PC-3 (cell line): ENCODE measurements at regions of chr17 and their contacts with region 1.

Region 1: DNA sequence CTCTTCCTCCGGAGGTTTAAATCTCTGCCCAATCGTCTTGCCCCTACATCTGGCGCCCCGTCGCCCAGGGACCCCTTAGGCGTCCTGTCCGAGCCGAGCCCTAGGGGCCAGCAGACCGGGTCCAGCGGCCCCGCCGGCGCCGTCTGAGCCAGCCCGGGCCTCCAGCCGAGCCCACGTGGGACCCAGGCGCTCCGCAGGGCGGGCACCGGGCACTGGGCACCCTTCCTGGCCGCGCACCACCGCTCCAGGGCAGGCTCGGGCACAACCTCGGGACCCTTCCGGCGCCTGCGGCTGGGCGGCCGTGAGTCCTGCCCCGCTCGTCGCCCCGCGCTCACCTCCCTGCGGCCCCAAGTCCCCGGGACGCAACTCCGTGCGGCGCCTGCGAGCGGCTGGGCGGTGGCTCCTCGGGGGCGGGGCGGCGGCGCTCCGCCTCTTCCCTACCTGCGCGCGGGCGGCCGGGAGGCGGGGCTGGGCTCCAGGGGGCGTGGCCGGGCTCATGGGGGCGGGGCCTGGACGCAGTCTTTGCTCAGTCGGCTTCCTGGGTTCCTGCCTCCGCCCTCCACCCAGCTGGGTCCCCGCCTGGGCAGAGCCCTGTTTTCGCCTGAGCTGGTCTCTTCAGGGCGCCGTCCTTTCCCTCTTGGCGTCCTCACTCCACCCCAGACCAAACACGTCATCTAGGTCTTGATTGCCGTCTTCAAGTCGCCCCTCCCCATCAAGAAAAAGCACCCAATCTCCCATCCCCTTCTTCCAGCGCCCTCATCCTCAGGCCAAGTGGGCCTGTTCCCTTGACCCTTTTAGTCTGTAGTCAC is at the start of gene RHBDF2:
- DNase-seq: peak; percentile 91
- ATAC-seq: peak; percentile 69
- H3K4me3 ChIP-seq: peak within 1 kb of the TSS; percentile 98
- H3K27ac ChIP-seq: peak within 1 kb of the TSS; percentile 49
- H3K4me1 ChIP-seq: peaks cover 33% of the 10 kb centered on the region
- H3K27me3 ChIP-seq: no peaks in the 10 kb centered on the region
- CTCF ChIP-seq: no peak
- total RNA-seq, gene RHBDF2: 52.3 and 74.8 TPM in 2 replicates

Region 2: DNA sequence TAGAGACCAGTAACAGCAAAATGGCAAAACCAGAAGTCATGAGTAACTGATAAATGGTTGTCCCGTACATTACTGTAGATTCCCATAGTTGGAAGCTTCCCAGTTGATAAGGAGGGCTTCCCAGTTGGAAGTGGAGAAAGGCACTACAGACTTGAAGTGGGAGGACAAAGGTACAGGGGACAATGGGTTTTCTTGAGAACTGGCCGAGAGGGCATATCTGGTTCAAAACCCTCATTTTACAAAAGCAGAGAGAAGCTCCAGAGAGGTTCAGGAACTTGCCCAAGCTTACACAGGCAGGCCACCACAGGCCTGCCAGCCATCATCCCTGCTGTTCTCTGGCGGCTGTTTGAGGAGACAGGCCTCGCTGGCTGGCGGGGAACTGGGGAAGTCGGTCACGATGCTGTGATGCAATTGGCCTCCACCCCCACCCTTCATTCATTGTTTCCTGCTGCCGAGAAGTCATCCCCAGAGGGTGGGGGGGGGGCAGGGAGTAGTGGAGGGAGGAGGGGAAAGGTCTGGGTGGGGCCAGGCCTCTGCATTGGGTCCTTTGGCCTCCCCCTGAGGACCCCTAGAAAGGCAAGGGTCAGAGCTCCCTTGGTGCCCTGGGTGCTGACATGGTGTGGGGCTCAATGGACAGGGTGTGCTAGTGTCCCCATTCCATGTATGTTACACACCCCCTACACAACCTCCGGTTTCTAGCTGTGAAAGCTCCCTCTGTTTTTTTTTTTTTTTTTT is 233.0 kb before region 1 on chr17:
- CTCF ChIA-PET with region 1: no interaction called
- POLR2A ChIA-PET with region 1: no interaction called
- intact Hi-C with region 1: no loop called
- DNase-seq: no peak
- ATAC-seq: no peak
- H3K4me3 ChIP-seq: no peak overlapping the region
- H3K27ac ChIP-seq: no peak overlapping the region
- H3K4me1 ChIP-seq: peaks cover 33% of the 10 kb centered on the region
- H3K27me3 ChIP-seq: no peaks in the 10 kb centered on the region
- CTCF ChIP-seq: no peak

Region 3: DNA sequence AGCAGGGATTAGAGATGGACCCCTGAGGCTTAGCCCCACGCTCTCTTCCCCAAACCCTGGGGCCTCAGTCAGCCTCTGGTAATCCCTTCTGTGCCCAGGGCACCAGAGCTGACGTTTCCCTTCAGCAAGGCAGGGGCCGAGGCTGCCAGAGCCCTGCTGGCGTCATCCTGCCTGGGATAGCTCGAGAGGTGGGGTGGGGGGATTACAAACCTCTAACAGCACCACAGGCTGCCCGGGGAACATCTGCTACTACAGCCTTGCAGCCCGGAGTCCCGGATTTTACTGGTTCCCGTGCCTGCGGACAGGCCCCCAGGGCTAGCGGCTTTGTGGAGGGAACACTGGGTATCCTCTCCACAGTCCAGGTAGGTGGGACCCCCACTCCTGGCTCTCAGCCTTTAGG is 33.9 kb before region 1 on chr17 and contains the start of gene AANAT:
- CTCF ChIA-PET with region 1: interaction called, 13 read pairs
- POLR2A ChIA-PET with region 1: no interaction called
- intact Hi-C with region 1: loop called (anchors 1 kb)
- DNase-seq: no peak
- ATAC-seq: no peak
- H3K4me3 ChIP-seq: no peak within 1 kb of the TSS
- H3K27ac ChIP-seq: no peak within 1 kb of the TSS
- H3K4me1 ChIP-seq: no peaks in the 10 kb centered on the region; the same call in 1 of the 2 replicates
- H3K27me3 ChIP-seq: no peaks in the 10 kb centered on the region
- CTCF ChIP-seq: no peak
- total RNA-seq, gene AANAT: not detected in 2 replicates

Region 4: GRCh38 chr17:76540381-76541300 is 39.4 kb after region 1 on chr17:
- CTCF ChIA-PET with region 1: interaction called, 10 read pairs
- POLR2A ChIA-PET with region 1: no interaction called
- intact Hi-C with region 1: no loop called
- DNase-seq: peak; percentile 90
- ATAC-seq: peak; percentile 93
- H3K4me3 ChIP-seq: peak overlapping the region; percentile 34; the same call in 1 of the 2 replicates
- H3K27ac ChIP-seq: no peak overlapping the region
- H3K4me1 ChIP-seq: peaks cover 9% of the 10 kb centered on the region
- H3K27me3 ChIP-seq: no peaks in the 10 kb centered on the region
- CTCF ChIP-seq: no peak

Region 5: DNA sequence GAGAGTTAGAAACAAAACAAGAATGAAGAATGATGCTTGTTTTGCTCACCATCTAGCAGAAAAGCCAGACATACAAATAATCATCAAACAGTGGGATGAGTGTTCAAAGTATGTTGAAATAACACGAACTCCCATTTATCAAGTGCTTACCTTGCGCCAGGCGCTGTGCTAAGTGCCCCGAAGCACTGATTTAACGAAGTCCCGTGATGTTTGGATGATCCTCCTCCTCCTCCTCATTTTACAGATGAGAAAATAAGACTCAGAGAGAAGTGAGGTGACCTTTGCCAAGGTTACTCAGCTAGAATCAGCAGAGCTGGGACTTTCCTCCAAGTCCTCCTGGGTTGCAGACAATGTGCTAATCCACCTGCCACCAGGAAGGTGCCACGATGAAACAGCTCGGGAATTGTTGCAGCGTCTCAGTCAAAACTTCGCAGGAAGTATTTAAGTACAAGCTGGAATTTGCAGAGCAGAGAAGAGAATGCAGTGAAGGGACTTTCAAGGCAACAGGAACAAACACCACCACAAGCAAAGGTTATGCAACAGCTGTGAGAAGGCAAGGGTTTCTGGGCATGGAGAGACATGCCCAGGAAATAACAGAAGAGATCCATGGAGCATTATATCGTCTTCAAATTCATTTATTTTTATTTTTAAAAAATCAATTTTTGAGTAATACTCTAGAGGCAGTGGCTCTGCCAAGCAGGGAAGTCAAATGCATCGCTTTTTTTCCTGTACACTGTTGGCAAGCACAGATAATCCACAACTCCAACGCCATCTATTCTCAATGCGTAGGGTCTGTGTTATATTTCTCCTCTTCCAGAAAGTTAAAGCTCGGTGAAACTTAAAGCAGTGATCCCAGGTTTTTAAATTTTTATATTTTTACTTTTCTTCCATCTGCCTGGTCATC is 49.7 kb after region 1 on chr17:
- CTCF ChIA-PET with region 1: no interaction called
- POLR2A ChIA-PET with region 1: no interaction called
- intact Hi-C with region 1: no loop called
- DNase-seq: peak; percentile 18
- ATAC-seq: no peak
- H3K4me3 ChIP-seq: no peak overlapping the region
- H3K27ac ChIP-seq: 0 out of 2 replicates have a peak overlapping the region, but pooled peaks have one; percentile 3
- H3K4me1 ChIP-seq: peaks cover 27% of the 10 kb centered on the region
- H3K27me3 ChIP-seq: no peaks in the 10 kb centered on the region
- CTCF ChIP-seq: no peak